HepG2 (cell line): ENCODE measurements at regions of chr17 and their contacts with region 1.

Region 1: GRCh38 chr17:51371732-51372151 is 111.4 kb downstream of the UTP18 start:
- DNase-seq: peak; percentile 69
- ATAC-seq: peak; percentile 97
- H3K4me3 ChIP-seq: no peak overlapping the region
- H3K27ac ChIP-seq: no peak overlapping the region
- H3K4me1 ChIP-seq: peaks cover 8% of the 10 kb centered on the region; the same call in 1 of the 2 replicates
- H3K27me3 ChIP-seq: peaks cover 0 to 8% of the 10 kb centered on the region in 2 experiments; a peak in 1 of 5 replicates
- CTCF ChIP-seq: peak; percentile 87
- EP300 ChIP-seq: no peak
- POLR2A ChIP-seq: no peak
- RAD21 ChIP-seq: peak; percentile 83

Region 2: GRCh38 chr17:51298508-51299371 is 73.0 kb before region 1 on chr17:
- CTCF ChIA-PET with region 1: no interaction called
- POLR2A ChIA-PET with region 1: no interaction called
- in situ Hi-C with region 1: no loop called
- intact Hi-C with region 1: loop called (anchors 1 kb)
- DNase-seq: peak; percentile 76
- ATAC-seq: peak; percentile 81
- H3K4me3 ChIP-seq: no peak overlapping the region
- H3K27ac ChIP-seq: no peak overlapping the region
- H3K4me1 ChIP-seq: no peaks in the 10 kb centered on the region
- H3K27me3 ChIP-seq: no peaks in the 10 kb centered on the region
- CTCF ChIP-seq: peak; percentile 84
- EP300 ChIP-seq: no peak
- POLR2A ChIP-seq: no peak
- RAD21 ChIP-seq: peak; percentile 52; the same call in 1 of the 2 replicates

Region 3: GRCh38 chr17:51387582-51387981 is 15.8 kb after region 1 on chr17:
- CTCF ChIA-PET with region 1: no interaction called
- POLR2A ChIA-PET with region 1: no interaction called
- in situ Hi-C with region 1: no loop called
- intact Hi-C with region 1: no loop called
- DNase-seq: no peak
- ATAC-seq: no peak
- H3K4me3 ChIP-seq: no peak overlapping the region
- H3K27ac ChIP-seq: no peak overlapping the region
- H3K4me1 ChIP-seq: peaks cover 7% of the 10 kb centered on the region; the same call in 1 of the 2 replicates
- H3K27me3 ChIP-seq: peaks cover 0 to 10% of the 10 kb centered on the region in 2 experiments; a peak in 1 of 5 replicates
- CTCF ChIP-seq: no peak
- EP300 ChIP-seq: no peak
- POLR2A ChIP-seq: no peak
- RAD21 ChIP-seq: no peak

Region 4: GRCh38 chr17:51533821-51534220 is 162.1 kb after region 1 on chr17:
- CTCF ChIA-PET with region 1: interaction called, 18 read pairs
- POLR2A ChIA-PET with region 1: no interaction called
- in situ Hi-C with region 1: loop called (anchors 25 kb)
- intact Hi-C with region 1: loop called (anchors 1 kb)
- DNase-seq: no peak
- ATAC-seq: no peak
- H3K4me3 ChIP-seq: no peak overlapping the region
- H3K27ac ChIP-seq: no peak overlapping the region
- H3K4me1 ChIP-seq: no peaks in the 10 kb centered on the region
- H3K27me3 ChIP-seq: no peaks in the 10 kb centered on the region
- CTCF ChIP-seq: no peak
- EP300 ChIP-seq: no peak
- POLR2A ChIP-seq: no peak
- RAD21 ChIP-seq: no peak

Region 5: DNA sequence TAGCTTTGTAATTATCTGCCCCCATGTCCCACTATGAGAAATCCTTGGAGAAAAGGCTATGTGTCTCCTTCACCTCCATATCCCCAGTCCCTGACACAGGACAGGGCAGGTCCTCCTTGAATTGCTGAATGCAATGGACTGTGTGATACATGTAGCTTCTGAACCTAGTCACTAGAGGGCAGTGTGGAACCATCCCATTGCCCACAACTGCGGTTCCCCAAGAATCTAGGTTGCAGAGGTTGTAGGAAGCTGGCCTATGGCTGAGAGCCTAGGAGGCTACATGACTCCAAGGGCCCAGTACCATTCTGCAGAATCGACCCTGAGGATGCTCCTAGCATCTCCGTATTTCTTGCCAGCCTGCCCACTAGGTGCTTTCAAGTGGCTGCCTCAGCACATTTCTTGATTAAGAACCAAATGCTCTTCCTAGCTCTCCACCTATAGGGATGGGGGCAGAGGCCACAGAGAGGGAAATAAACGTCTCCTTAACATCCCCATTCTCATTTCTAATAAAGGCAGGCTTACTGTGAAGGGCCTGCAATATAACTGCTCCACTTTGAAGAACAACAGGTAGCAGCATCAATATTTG is 392.7 kb after region 1 on chr17:
- CTCF ChIA-PET with region 1: no interaction called
- POLR2A ChIA-PET with region 1: no interaction called
- in situ Hi-C with region 1: no loop called
- intact Hi-C with region 1: loop called (anchors 1 kb)
- DNase-seq: peak; percentile 60
- ATAC-seq: peak; percentile 100
- H3K4me3 ChIP-seq: no peak overlapping the region
- H3K27ac ChIP-seq: no peak overlapping the region
- H3K4me1 ChIP-seq: no peaks in the 10 kb centered on the region
- H3K27me3 ChIP-seq: no peaks in the 10 kb centered on the region
- CTCF ChIP-seq: peak; percentile 96
- EP300 ChIP-seq: no peak
- POLR2A ChIP-seq: no peak
- RAD21 ChIP-seq: peak; percentile 78